ENCODE measurements at regions of chr2 and their contacts with region 1.

Region 1: DNA sequence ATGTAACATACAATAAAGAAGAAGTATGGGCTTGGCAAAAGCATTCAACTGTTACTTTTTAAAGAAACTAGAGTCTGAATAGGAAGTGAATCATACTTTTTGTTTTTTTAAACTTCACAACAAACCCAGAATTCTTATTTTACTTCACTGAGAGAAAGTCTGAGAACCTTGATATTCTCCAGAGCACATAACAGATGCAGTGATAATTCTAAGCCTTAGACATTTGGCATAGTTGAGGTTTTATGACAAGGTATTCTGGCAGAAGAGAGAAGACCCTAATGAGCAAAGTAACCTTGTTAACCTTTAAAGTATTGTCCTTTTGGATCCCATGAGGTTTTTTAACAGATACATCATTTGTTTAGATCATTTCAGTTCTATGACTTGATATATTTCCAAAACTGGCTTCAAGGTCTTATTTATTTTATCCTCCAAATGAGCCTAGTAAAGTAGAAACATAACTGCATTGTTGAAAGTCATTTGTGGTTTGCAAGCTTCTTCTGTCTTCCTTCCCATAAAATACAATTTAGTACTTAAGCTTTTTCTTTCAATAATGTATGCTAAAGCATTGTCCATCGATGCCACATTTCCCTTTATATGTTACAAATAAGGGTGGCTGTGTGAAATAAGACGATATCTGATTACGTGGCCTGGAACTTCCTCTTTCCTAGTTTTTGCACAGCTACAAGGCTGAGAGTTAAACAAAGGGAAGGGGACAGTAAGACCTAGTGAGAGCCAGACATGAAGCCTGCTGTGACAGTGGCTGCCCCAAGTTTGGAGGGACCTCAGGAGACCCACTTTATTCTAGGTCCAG is 86.1 kb upstream of the ITPRID2 start:
- DNase-seq: no peak
- H3K4me3 Mint-ChIP-seq: no peak overlapping the region
- H3K27ac Mint-ChIP-seq: no peak overlapping the region
- H3K4me1 Mint-ChIP-seq: peaks cover 3% of the 10 kb centered on the region
- H3K27me3 Mint-ChIP-seq: peaks cover 21% of the 10 kb centered on the region

Region 2: DNA sequence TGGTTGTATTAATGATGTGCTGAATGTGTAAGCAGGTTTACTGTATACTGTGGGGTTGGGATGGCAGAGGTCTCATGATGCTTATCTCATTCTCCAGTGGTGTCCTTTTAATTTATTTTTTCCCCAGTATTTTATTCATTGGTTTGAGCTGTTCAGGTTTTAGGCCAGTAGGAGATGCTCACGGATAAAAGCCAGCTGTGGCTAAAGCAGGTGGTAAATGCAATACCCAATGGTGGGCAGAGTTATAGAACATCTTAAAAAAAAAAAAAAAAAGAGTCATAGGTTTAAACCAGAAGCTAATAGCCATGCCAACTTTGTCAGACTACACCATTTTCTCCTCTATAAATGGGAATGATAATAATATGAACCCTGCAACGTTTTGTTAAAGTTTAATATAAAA is 67.4 kb before region 1 on chr2:
- intact Hi-C with region 1: no loop called
- DNase-seq: no peak
- H3K4me3 Mint-ChIP-seq: no peak overlapping the region
- H3K27ac Mint-ChIP-seq: no peak overlapping the region
- H3K4me1 Mint-ChIP-seq: peaks cover 3% of the 10 kb centered on the region
- H3K27me3 Mint-ChIP-seq: peaks cover 39% of the 10 kb centered on the region

Region 3: GRCh38 chr2:181774685-181775084 is 30.7 kb before region 1 on chr2:
- intact Hi-C with region 1: loop called (anchors 5 kb)
- DNase-seq: no peak
- H3K4me3 Mint-ChIP-seq: no peak overlapping the region
- H3K27ac Mint-ChIP-seq: no peak overlapping the region
- H3K4me1 Mint-ChIP-seq: peaks cover 11% of the 10 kb centered on the region
- H3K27me3 Mint-ChIP-seq: peaks cover 5% of the 10 kb centered on the region